CD4-positive, alpha-beta T cell (primary cell): ENCODE measurements at regions of chr5 and their contacts with region 1.

Region 1: GRCh38 chr5:157148734-157149615 is 6.3 kb upstream of the MED7 start:
- DNase-seq: peak; percentile 66 to 92 (median 77)
- ATAC-seq: peak; percentile 86
- H3K4me3 ChIP-seq: no peak overlapping the region
- H3K4me3 Mint-ChIP-seq: peak overlapping the region; percentile 28
- H3K27ac ChIP-seq: no peak overlapping the region
- H3K27ac Mint-ChIP-seq: peak overlapping the region; percentile 53
- H3K4me1 ChIP-seq: peaks cover 35% of the 10 kb centered on the region
- H3K4me1 Mint-ChIP-seq: peaks cover 46% of the 10 kb centered on the region
- H3K27me3 ChIP-seq: no peaks in the 10 kb centered on the region
- H3K27me3 Mint-ChIP-seq: no peaks in the 10 kb centered on the region
- CTCF ChIP-seq: peak; percentile 82

Region 2: GRCh38 chr5:157180374-157181264 is 31.6 kb after region 1 on chr5 and contains the start of gene ITK:
- CTCF ChIA-PET with region 1: interaction called, 13 read pairs
- POLR2A ChIA-PET with region 1: interaction called, 24 read pairs
- intact Hi-C with region 1: loop called in 1 of 2 experiments (anchors 2 kb)
- DNase-seq: peak in 8 of 14 experiments; percentile 29 to 92 (median 53)
- ATAC-seq: peak; percentile 76
- H3K4me3 ChIP-seq: peak within 1 kb of the TSS; percentile 85
- H3K4me3 Mint-ChIP-seq: peak within 1 kb of the TSS; percentile 98
- H3K27ac ChIP-seq: peak within 1 kb of the TSS; percentile 69 to 74
- H3K27ac Mint-ChIP-seq: peak within 1 kb of the TSS; percentile 96
- H3K4me1 ChIP-seq: peaks cover 38% of the 10 kb centered on the region
- H3K4me1 Mint-ChIP-seq: peaks cover 57% of the 10 kb centered on the region
- H3K27me3 ChIP-seq: no peaks in the 10 kb centered on the region
- H3K27me3 Mint-ChIP-seq: no peaks in the 10 kb centered on the region
- CTCF ChIP-seq: no peak
- total RNA-seq, gene ITK: 289 to 292 TPM

Region 3: DNA sequence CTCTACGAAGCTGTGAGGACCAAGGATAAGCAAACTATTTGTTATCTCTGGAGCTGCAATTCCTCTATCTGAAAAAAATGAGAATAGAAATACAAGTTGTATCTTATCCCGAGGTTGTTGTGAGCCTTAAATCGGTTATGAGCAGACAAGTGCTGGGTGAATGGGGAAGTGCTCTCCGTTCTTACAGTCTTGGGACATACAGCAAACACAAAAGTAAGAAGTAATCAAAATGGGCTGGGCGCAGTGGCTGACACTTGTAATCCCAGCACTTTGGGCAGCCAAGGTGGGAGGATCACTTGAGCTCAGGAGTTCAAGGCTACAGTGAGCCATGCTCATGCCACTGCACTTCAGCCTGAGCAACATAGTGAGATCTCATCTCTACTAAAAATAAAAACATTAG is 63.3 kb after region 1 on chr5:
- CTCF ChIA-PET with region 1: interaction called, 5 read pairs
- POLR2A ChIA-PET with region 1: interaction called, 26 read pairs
- intact Hi-C with region 1: loop called in 1 of 2 experiments (anchors 2 kb)
- DNase-seq: no peak
- ATAC-seq: no peak
- H3K4me3 ChIP-seq: no peak overlapping the region
- H3K4me3 Mint-ChIP-seq: peak overlapping the region; percentile 9
- H3K27ac ChIP-seq: peak overlapping the region; percentile 21 to 24
- H3K27ac Mint-ChIP-seq: peak overlapping the region; percentile 80
- H3K4me1 ChIP-seq: peaks cover 92% of the 10 kb centered on the region
- H3K4me1 Mint-ChIP-seq: peaks cover 96% of the 10 kb centered on the region
- H3K27me3 ChIP-seq: no peaks in the 10 kb centered on the region
- H3K27me3 Mint-ChIP-seq: no peaks in the 10 kb centered on the region
- CTCF ChIP-seq: no peak

Region 4: GRCh38 chr5:157233515-157233914 is 84.5 kb after region 1 on chr5:
- CTCF ChIA-PET with region 1: interaction called, 5 read pairs
- POLR2A ChIA-PET with region 1: no interaction called
- intact Hi-C with region 1: loop called in 1 of 2 experiments (anchors 2 kb)
- DNase-seq: peak in 4 of 14 experiments; percentile 32 to 87 (median 77)
- ATAC-seq: peak; percentile 93
- H3K4me3 ChIP-seq: no peak overlapping the region
- H3K4me3 Mint-ChIP-seq: no peak overlapping the region
- H3K27ac ChIP-seq: peak overlapping the region in 1 of 2 donors; percentile 28
- H3K27ac Mint-ChIP-seq: peak overlapping the region; percentile 79
- H3K4me1 ChIP-seq: peaks cover 27% of the 10 kb centered on the region
- H3K4me1 Mint-ChIP-seq: peaks cover 64% of the 10 kb centered on the region
- H3K27me3 ChIP-seq: no peaks in the 10 kb centered on the region
- H3K27me3 Mint-ChIP-seq: no peaks in the 10 kb centered on the region
- CTCF ChIP-seq: no peak

Region 5: GRCh38 chr5:157312492-157312891 is 163.5 kb after region 1 on chr5:
- CTCF ChIA-PET with region 1: interaction called, 8 read pairs
- POLR2A ChIA-PET with region 1: interaction called, 18 read pairs
- intact Hi-C with region 1: loop called (anchors 1 to 2 kb)
- DNase-seq: peak; percentile 41 to 88 (median 56)
- ATAC-seq: peak; percentile 92
- H3K4me3 ChIP-seq: no peak overlapping the region
- H3K4me3 Mint-ChIP-seq: peak overlapping the region; percentile 40
- H3K27ac ChIP-seq: no peak overlapping the region
- H3K27ac Mint-ChIP-seq: peak overlapping the region; percentile 73
- H3K4me1 ChIP-seq: peaks cover 46% of the 10 kb centered on the region
- H3K4me1 Mint-ChIP-seq: peaks cover 48% of the 10 kb centered on the region
- H3K27me3 ChIP-seq: no peaks in the 10 kb centered on the region
- H3K27me3 Mint-ChIP-seq: no peaks in the 10 kb centered on the region
- CTCF ChIP-seq: peak; percentile 76

Region 6: DNA sequence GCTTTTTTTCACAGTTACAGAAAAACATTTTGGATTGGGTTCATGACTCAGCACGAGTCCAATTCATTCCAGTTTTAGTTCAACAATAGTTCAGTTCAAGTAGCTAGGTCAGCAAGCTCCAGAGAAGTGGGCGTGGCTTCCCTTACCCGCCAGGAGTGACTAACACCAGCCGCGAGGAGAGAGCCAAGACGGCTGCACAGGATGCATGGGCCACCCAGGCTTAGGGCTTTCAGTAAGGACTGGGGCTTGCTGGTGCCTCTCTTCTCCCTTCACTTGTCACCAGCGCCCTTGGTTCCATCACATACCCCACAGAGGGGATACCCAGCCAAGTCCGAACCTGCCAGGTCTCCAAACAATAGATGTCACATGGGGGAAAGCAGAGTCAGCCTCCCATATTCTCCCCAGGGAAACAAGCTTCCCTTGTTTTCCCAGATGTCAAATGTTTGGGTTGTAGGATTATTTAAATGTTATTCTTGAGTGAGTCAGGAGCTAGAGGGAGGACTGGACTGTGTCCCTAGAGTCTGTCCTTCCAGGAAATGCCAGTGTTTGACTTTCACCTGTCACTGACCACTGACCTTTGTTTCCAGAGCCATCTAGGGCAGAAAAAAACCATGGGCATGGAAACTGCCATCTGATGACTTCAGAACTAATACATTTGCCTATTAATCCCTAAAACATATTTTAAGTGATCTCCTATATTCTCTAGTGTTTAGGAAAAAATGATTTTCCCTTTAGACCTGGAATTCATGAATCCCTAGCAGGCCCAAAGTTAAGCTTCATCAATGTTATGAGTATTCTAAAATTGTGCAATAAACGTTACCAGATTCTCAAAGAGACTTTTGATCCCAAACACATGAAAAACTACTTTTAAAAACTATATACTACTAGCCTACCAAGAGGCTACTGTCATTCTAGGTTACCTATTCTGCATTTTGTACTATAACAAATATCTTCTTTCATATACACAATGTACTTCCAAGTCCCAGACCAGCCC is 363.0 kb after region 1 on chr5:
- CTCF ChIA-PET with region 1: no interaction called
- POLR2A ChIA-PET with region 1: no interaction called
- intact Hi-C with region 1: no loop called
- DNase-seq: peak in 7 of 14 experiments; percentile 11 to 49 (median 33)
- ATAC-seq: no peak
- H3K4me3 ChIP-seq: no peak overlapping the region
- H3K4me3 Mint-ChIP-seq: no peak overlapping the region
- H3K27ac ChIP-seq: peak overlapping the region in 1 of 2 donors; percentile 16
- H3K27ac Mint-ChIP-seq: no peak overlapping the region
- H3K4me1 ChIP-seq: peaks cover 6% of the 10 kb centered on the region
- H3K4me1 Mint-ChIP-seq: no peaks in the 10 kb centered on the region
- H3K27me3 ChIP-seq: no peaks in the 10 kb centered on the region
- H3K27me3 Mint-ChIP-seq: no peaks in the 10 kb centered on the region
- CTCF ChIP-seq: no peak